ENCODE measurements at regions of chr1 and their contacts with region 1.

Region 1: DNA sequence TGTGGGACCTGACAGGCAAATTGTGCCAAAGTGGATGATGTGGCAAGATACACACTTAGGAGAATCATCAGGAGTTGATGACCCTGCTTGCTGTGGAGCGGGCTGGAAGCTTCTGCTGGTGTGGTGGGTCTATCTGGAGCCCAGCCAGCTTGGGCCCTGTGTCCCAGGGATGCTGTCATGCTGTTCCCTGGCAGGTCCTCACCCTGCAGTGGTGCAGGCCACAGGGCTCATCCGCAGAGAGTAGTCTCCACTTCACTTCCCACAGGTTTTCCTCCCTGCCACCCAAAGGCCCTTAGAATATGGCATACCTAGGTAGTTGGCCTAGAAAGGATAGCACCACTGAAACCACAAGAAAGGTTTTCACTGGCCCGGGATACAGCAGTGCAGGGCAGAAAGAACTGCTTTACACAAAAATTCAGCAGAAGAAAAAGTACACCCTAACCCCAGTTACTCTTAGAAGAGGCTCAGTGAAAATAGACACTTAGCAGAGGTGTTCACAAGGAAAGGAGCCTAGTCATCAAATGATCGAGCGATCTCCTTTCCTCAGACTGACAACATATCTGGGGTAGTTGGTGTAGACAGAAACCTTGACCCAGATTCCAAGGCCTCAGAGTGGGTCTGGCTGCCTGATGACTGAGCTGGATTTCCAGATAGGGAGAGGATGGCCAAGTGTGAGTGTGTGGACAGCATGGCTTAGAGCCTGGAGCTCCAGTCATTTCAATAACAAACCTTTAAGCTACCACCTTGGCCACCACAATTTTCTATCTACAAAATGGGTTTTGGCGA is 1.3 kb upstream of the C1orf226 start:
- DNase-seq: no peak
- H3K4me3 Mint-ChIP-seq: no peak overlapping the region
- H3K27ac Mint-ChIP-seq: no peak overlapping the region
- H3K4me1 Mint-ChIP-seq: no peaks in the 10 kb centered on the region
- H3K27me3 Mint-ChIP-seq: no peaks in the 10 kb centered on the region

Region 2: DNA sequence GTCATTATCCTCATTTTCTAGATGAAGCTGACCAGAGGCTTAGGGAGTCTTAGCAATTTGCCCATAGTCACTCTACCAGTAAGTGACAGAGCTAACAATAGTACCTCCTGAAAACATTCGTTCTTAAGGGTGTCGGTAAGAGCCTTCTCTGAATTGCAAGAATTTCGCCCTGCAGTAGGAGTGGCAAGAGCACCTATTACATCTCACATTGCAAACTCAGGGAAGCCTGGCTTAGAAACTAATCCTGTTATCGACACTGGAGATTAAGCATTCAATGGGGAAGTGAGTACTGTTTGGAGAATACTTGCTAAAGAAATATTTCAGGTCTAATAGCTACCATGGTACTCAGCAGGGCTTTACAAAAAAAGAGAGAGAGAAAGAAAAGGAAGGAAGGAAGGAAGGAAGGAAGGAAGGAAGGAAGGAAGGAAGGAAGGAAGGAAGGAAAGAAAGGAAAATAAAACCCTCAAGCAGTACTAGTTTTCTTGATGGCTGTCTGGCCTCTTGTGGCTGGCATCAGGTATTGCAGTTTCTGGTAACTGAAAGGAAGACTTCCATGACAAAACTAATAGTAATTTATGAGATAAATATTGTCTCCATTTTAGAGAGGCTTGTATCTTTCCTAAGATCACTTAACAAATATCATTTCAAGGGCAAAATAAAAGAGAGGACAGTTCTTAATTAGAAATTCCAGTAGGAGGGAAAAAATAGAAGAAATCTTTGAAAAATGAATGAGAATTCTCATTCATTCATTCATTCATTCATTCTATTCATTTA is 11.7 kb after region 1 on chr1:
- CTCF ChIA-PET with region 1: interaction called, 10 read pairs
- DNase-seq: peak; percentile 41
- H3K4me3 Mint-ChIP-seq: no peak overlapping the region
- H3K27ac Mint-ChIP-seq: no peak overlapping the region
- H3K4me1 Mint-ChIP-seq: peaks cover 4% of the 10 kb centered on the region
- H3K27me3 Mint-ChIP-seq: peaks cover 30% of the 10 kb centered on the region